ENCODE measurements at regions of chr5 and their contacts with region 1.

Region 1: GRCh38 chr5:61408476-61409168 is 76.6 kb downstream of the ZSWIM6 start:
- DNase-seq: peak; percentile 99
- ATAC-seq: peak; percentile 99
- H3K4me3 Mint-ChIP-seq: peak overlapping the region; percentile 59
- H3K27ac Mint-ChIP-seq: peak overlapping the region; percentile 51
- H3K4me1 Mint-ChIP-seq: peaks cover 31% of the 10 kb centered on the region
- H3K27me3 Mint-ChIP-seq: no peaks in the 10 kb centered on the region

Region 2: DNA sequence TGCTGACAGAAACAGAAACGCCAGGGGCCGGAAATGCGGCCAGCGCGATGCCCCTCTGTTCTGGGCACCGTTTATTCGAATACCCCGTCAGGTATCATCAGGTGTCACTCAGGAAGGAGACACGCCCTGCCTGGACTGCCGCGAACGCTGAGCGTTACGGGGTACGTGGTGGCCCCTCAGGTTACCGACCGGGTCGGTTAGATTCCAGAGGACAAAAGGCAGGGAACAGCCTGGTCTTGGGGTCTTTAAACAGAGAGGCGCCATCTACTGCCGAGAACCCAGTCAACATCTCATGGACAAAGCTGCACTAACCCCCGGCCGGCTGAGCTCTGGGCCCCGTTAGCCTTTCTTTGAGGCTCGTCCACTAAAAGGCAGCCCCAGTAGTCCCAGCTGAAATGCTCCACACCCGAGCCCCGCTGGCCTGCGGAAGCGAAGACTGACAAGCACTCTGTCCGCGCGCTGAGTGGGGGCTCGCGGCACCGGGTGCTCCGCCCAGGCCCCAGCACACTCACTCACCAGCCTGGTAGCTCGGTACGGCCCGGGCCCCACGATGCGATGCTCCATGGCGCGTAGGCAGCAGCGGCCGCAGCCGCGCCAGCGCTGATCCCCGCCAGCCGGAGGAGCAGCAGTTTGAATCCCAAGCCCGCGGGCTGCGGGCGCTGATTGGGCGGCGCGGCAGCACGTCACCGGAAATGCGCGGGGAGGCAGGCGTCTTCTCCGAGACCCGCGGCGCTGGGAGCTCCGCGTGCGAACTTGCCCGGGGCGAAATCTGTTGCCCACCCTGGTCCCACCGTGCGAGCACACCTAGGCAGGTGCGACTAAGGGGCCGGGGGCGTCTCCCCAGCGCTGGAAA is 708.9 kb before region 1 on chr5 and contains the start of gene DEPDC1B:
- CTCF ChIA-PET with region 1: no interaction called
- POLR2A ChIA-PET with region 1: no interaction called
- intact Hi-C with region 1: loop called in 1 of 2 experiments (anchors 5 kb)
- DNase-seq: peak; percentile 94
- ATAC-seq: peak; percentile 97
- H3K4me3 Mint-ChIP-seq: peak within 1 kb of the TSS; percentile 84
- H3K27ac Mint-ChIP-seq: peak within 1 kb of the TSS; percentile 88
- H3K4me1 Mint-ChIP-seq: peaks cover 16% of the 10 kb centered on the region
- H3K27me3 Mint-ChIP-seq: peaks cover 2% of the 10 kb centered on the region
- total RNA-seq, gene DEPDC1B: 34.2 to 40.3 TPM

Region 3: GRCh38 chr5:61162010-61162831 is 246.4 kb before region 1 on chr5 and contains the start of gene SMIM15:
- CTCF ChIA-PET with region 1: no interaction called
- POLR2A ChIA-PET with region 1: no interaction called
- intact Hi-C with region 1: loop called (anchors 2 to 10 kb)
- DNase-seq: peak; percentile 91
- ATAC-seq: peak; percentile 94
- H3K4me3 Mint-ChIP-seq: peak within 1 kb of the TSS; percentile 88
- H3K27ac Mint-ChIP-seq: peak within 1 kb of the TSS; percentile 95
- H3K4me1 Mint-ChIP-seq: peaks cover 35% of the 10 kb centered on the region
- H3K27me3 Mint-ChIP-seq: no peaks in the 10 kb centered on the region
- total RNA-seq, gene SMIM15: 73.5 to 84.0 TPM

Region 4: GRCh38 chr5:61280205-61280604 is 128.4 kb before region 1 on chr5:
- CTCF ChIA-PET with region 1: no interaction called
- POLR2A ChIA-PET with region 1: no interaction called
- intact Hi-C with region 1: loop called in 1 of 2 experiments (anchors 2 kb)
- DNase-seq: peak; percentile 35
- ATAC-seq: peak; percentile 39
- H3K4me3 Mint-ChIP-seq: no peak overlapping the region
- H3K27ac Mint-ChIP-seq: no peak overlapping the region
- H3K4me1 Mint-ChIP-seq: peaks cover 41% of the 10 kb centered on the region
- H3K27me3 Mint-ChIP-seq: no peaks in the 10 kb centered on the region

Region 5: DNA sequence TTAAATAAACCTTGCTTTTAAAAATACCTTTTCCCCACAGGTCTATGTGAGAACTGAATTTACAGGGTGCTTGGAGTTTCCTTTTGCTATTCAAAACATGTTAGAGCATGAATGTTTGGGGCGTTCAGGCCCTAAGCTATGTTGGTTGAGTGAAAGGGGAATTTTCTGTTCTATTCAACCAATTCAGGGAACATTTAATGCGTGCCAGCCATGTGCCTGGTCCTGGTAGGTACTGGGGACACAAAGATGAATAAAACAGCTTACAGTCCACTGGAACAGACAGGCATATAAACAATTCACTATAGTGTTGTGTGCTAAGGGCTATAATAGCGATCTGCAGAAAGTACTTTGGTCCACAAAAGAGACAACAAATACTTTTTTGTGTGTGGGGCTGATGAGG is 32.0 kb after region 1 on chr5:
- CTCF ChIA-PET with region 1: no interaction called
- POLR2A ChIA-PET with region 1: no interaction called
- intact Hi-C with region 1: no loop called
- DNase-seq: no peak
- ATAC-seq: no peak
- H3K4me3 Mint-ChIP-seq: no peak overlapping the region
- H3K27ac Mint-ChIP-seq: no peak overlapping the region
- H3K4me1 Mint-ChIP-seq: no peaks in the 10 kb centered on the region
- H3K27me3 Mint-ChIP-seq: no peaks in the 10 kb centered on the region

Region 6: DNA sequence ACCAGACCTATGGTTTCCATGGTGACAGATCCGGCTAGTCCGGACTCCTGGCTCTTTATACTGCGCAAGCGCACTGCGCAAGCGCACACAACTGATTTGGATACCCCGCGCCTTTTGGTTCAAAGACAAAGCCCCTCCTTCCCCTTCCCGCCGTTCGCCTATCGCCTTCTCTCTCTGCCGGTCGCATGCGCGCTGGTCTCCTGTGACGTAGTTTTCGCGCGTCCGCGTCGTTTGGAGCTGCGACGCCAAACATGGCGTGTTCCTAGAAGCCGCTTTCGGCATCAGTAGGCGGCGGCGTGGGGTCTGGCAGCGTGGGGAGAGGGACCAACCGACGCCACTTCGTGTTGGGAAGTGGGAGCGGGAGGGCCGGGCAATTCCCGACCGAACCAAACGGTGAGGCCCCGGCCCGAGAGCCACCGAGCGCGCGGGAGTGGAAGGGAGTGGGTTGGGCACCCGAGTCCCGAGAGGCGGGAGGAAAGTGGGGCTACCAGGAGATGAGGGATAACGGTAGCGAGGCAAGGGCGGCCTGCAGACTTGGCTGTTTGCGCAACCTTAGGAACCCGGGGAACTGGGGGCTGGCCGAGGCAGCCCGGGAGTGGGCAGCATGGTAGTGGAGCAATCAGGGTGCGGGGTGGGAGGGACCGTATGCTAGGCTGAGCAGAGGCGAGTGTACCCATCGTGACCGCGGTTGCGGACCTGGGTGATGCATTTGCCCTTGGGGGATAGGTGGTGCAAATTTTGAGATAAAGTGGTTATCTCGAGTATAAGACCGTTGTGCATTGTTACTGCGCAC is 1004.1 kb after region 1 on chr5 and contains the start of gene IPO11:
- CTCF ChIA-PET with region 1: no interaction called
- POLR2A ChIA-PET with region 1: no interaction called
- intact Hi-C with region 1: loop called in 1 of 2 experiments (anchors 10 kb)
- DNase-seq: peak; percentile 99
- ATAC-seq: peak; percentile 99
- H3K4me3 Mint-ChIP-seq: peak within 1 kb of the TSS; percentile 90
- H3K27ac Mint-ChIP-seq: peak within 1 kb of the TSS; percentile 85
- H3K4me1 Mint-ChIP-seq: peaks cover 25% of the 10 kb centered on the region
- H3K27me3 Mint-ChIP-seq: no peaks in the 10 kb centered on the region
- total RNA-seq, gene IPO11: 57.2 to 69.9 TPM

Measured in activated CD4-positive, alpha-beta T cell treated with anti-CD3 and anti-CD28 coated beads for 36 hours (primary cell).